ENCODE measurements at regions of chr5 and their contacts with region 1.

Region 1: DNA sequence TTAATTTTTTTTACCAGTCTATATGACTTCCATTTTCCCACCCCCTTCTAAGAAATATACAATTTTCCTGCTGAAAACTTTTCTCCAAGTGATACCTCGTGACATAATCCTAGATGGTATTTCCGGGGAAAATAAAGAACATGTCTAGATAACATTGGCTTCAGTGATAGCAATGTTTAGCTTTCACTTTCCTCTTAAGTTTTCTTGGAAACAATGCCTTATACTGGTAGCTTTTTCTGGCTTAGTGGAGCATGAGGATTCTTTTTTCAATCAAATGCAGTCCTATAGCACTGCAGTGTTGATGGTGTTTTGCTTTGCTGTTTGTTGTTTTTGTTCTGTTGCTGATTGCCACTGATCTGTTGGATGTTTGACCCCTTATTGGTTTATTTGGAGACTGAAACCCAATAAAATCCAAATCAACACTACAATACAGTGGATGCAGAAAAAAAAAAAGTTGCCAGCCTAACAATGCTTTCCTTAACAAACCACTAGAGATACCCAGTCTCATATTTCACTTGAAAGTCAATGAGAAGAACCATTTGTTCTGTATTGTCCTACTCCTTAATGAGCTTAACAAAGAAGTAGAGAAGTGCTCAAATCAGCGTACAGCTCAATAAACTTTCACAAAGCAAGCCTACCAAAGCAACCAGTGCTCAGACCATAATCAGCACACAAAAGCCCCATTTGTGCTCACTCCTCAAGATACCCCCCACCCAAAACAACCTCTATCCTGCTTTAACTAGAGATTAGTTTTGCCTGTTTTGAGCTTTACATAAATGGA is 74.2 kb upstream of the GRAMD2B start:
- DNase-seq: no peak
- ATAC-seq: no peak
- H3K4me3 ChIP-seq: no peak overlapping the region
- H3K27ac ChIP-seq: no peak overlapping the region
- H3K4me1 ChIP-seq: peaks cover 0 to under 1% (median 0%) of the 10 kb centered on the region in 4 donors
- H3K27me3 ChIP-seq: no peaks in the 10 kb centered on the region
- CTCF ChIP-seq: no peak
- POLR2A ChIP-seq: no peak

Region 2: GRCh38 chr5:126300293-126300692 is 48.8 kb before region 1 on chr5:
- intact Hi-C with region 1: no loop called
- DNase-seq: no peak
- ATAC-seq: no peak
- H3K4me3 ChIP-seq: no peak overlapping the region
- H3K27ac ChIP-seq: no peak overlapping the region
- H3K4me1 ChIP-seq: no peaks in the 10 kb centered on the region
- H3K27me3 ChIP-seq: no peaks in the 10 kb centered on the region
- CTCF ChIP-seq: no peak
- POLR2A ChIP-seq: no peak

Region 3: GRCh38 chr5:126531543-126532120 is 182.6 kb after region 1 on chr5:
- intact Hi-C with region 1: loop called in 1 of 2 experiments (anchors 10 kb)
- DNase-seq: no peak
- ATAC-seq: no peak
- H3K4me3 ChIP-seq: no peak overlapping the region
- H3K27ac ChIP-seq: no peak overlapping the region
- H3K4me1 ChIP-seq: no peaks in the 10 kb centered on the region
- H3K27me3 ChIP-seq: no peaks in the 10 kb centered on the region
- CTCF ChIP-seq: no peak
- POLR2A ChIP-seq: no peak

Measured in right lobe of liver (tissue), 6 donors.